ENCODE measurements at regions of chr15 and their contacts with region 1.

Region 1: DNA sequence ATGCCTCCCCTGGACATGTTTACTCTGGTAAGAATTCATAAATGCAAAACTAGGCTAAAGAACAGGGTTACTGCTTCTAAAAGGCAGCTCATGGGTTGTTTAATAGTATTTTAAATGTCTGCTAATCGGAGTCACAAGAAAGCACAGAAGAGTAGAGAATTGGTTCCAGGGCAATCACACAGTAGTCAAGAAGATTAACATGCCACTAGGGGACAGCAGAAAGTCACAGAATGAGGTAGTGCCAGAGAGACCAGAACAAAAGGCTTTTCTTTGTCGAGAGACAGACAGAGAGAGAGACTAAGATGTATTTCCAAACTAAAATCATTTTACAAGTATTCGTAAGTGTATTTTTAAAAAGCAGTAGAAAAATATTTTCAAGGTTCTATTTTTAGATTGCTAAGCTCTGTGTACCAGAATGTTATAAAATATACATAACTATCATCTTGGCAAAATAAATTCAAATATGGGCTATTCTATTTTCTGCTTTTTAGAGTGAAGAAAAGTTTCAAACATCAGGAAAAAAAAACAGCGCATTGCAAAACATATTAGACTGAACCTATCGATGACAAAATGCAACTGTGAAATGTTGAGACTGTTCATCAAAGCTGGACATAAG is 78.3 kb upstream of the CDIN1 start:
- DNase-seq: peak; percentile 69
- H3K4me3 Mint-ChIP-seq: no peak overlapping the region
- H3K27ac Mint-ChIP-seq: no peak overlapping the region
- H3K4me1 Mint-ChIP-seq: no peaks in the 10 kb centered on the region
- H3K27me3 Mint-ChIP-seq: peaks cover 33% of the 10 kb centered on the region
- CTCF ChIP-seq: peak; percentile 66

Region 2: GRCh38 chr15:35751413-35752133 is 749.6 kb before region 1 on chr15:
- CTCF ChIA-PET with region 1: interaction called, 11 read pairs
- POLR2A ChIA-PET with region 1: no interaction called
- intact Hi-C with region 1: loop called (anchors 5 kb)
- DNase-seq: peak; percentile 80
- H3K4me3 Mint-ChIP-seq: no peak overlapping the region
- H3K27ac Mint-ChIP-seq: no peak overlapping the region
- H3K4me1 Mint-ChIP-seq: no peaks in the 10 kb centered on the region
- H3K27me3 Mint-ChIP-seq: no peaks in the 10 kb centered on the region
- CTCF ChIP-seq: peak; percentile 68

Region 3: GRCh38 chr15:36407647-36408046 is 93.5 kb before region 1 on chr15:
- CTCF ChIA-PET with region 1: no interaction called
- POLR2A ChIA-PET with region 1: no interaction called
- intact Hi-C with region 1: no loop called
- DNase-seq: peak; percentile 44
- H3K4me3 Mint-ChIP-seq: no peak overlapping the region
- H3K27ac Mint-ChIP-seq: no peak overlapping the region
- H3K4me1 Mint-ChIP-seq: peaks cover 8% of the 10 kb centered on the region
- H3K27me3 Mint-ChIP-seq: no peaks in the 10 kb centered on the region
- CTCF ChIP-seq: no peak

Region 4: GRCh38 chr15:36511594-36511993 is 10.4 kb after region 1 on chr15:
- CTCF ChIA-PET with region 1: interaction called, 17 read pairs
- POLR2A ChIA-PET with region 1: no interaction called
- intact Hi-C with region 1: no loop called
- DNase-seq: no peak
- H3K4me3 Mint-ChIP-seq: no peak overlapping the region
- H3K27ac Mint-ChIP-seq: no peak overlapping the region
- H3K4me1 Mint-ChIP-seq: no peaks in the 10 kb centered on the region
- H3K27me3 Mint-ChIP-seq: peaks cover 32% of the 10 kb centered on the region
- CTCF ChIP-seq: no peak

Region 5: GRCh38 chr15:36557364-36557763 is 56.2 kb after region 1 on chr15:
- CTCF ChIA-PET with region 1: no interaction called
- POLR2A ChIA-PET with region 1: no interaction called
- intact Hi-C with region 1: no loop called
- DNase-seq: no peak
- H3K4me3 Mint-ChIP-seq: no peak overlapping the region
- H3K27ac Mint-ChIP-seq: no peak overlapping the region
- H3K4me1 Mint-ChIP-seq: no peaks in the 10 kb centered on the region
- H3K27me3 Mint-ChIP-seq: peaks cover 12% of the 10 kb centered on the region
- CTCF ChIP-seq: no peak

Region 6: DNA sequence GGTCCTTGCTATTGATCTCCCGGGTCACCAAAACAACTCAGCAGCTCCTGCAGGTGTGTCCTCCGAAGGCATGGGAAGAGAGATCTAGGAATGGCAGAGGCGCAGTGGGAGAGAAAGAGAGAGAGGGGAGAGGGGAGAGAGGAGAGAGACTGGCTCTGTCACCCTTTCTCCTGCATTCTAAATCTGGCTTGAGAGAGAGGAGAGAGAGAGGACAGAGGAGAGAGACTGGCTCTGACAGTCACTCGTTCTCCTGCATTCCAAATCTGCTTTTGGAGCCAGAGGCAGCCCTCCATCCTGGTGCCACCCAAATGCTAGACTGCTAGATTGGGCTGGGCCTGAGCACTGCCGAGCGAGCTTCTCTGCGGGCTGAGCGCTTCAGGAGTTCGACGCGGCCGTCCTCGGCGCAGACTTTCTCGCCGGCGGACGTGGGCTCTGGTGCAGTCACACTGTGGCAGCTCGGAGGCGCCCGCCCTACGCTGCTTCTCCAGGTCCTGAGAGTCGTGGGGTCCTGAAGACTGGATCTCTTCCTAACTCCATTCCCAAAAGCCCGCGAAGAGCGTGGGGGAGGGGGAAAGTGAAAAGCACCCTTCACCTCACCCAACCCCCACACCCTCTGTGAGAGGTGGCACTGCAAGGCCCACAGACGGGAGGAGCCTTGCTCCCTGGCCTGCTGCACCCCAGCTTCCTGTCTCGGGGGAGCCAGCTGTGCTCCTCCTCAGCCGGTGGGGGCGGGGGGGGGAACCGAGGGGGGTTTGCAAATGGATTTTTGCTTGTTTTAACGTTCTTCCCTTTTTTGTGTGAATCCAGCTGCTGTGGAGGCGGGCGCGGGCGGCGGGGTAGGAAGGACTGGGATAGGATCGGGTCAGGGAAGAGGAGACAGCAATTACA is 376.9 kb after region 1 on chr15:
- CTCF ChIA-PET with region 1: interaction called, 13 read pairs
- POLR2A ChIA-PET with region 1: no interaction called
- intact Hi-C with region 1: loop called (anchors 5 kb)
- DNase-seq: no peak
- H3K4me3 Mint-ChIP-seq: no peak overlapping the region
- H3K27ac Mint-ChIP-seq: no peak overlapping the region
- H3K4me1 Mint-ChIP-seq: peaks cover 4% of the 10 kb centered on the region
- H3K27me3 Mint-ChIP-seq: peaks cover 87% of the 10 kb centered on the region
- CTCF ChIP-seq: no peak

Region 7: GRCh38 chr15:37134699-37135131 is 633.5 kb after region 1 on chr15:
- CTCF ChIA-PET with region 1: interaction called, 7 read pairs
- POLR2A ChIA-PET with region 1: no interaction called
- intact Hi-C with region 1: loop called (anchors 1 kb)
- DNase-seq: peak; percentile 64
- H3K4me3 Mint-ChIP-seq: no peak overlapping the region
- H3K27ac Mint-ChIP-seq: no peak overlapping the region
- H3K4me1 Mint-ChIP-seq: peaks cover 9% of the 10 kb centered on the region
- H3K27me3 Mint-ChIP-seq: peaks cover 47% of the 10 kb centered on the region
- CTCF ChIP-seq: no peak

Region 8: GRCh38 chr15:37891766-37892368 is 1390.7 kb after region 1 on chr15:
- CTCF ChIA-PET with region 1: no interaction called
- POLR2A ChIA-PET with region 1: no interaction called
- intact Hi-C with region 1: loop called (anchors 5 kb)
- DNase-seq: peak; percentile 47
- H3K4me3 Mint-ChIP-seq: no peak overlapping the region
- H3K27ac Mint-ChIP-seq: no peak overlapping the region
- H3K4me1 Mint-ChIP-seq: no peaks in the 10 kb centered on the region
- H3K27me3 Mint-ChIP-seq: peaks cover 60% of the 10 kb centered on the region
- CTCF ChIP-seq: peak; percentile 90